ENCODE measurements at regions of chr5 and their contacts with region 1.

Region 1: DNA sequence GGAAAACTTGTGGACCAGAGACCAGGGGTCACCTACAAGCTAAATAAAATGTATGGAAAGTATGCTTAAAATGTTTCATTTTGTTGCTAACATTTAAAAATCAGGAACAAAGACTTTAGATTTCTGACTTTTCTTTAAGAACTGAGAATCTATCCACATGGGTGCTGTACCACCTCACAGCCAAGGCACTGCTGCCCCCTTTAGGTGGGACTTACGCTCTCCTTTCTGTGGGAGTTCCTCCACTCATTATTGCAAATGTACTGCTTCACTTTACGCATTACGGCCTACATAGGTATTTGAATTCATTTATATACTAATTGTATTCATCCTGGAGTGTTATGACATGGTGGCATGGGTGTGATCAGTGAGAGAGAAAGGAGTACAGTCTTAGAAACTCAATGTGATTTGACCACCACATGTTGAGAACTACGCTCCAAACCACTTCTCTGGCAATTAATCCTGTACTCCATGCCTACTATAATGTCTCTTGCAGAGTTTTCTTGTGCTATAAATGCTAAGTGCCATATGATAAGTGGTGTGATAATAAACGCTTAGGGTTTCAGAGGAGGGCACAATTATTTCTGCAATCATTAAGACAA is 24.7 kb upstream of the CETN3 start:
- DNase-seq: peak; percentile 82
- H3K4me3 Mint-ChIP-seq: no peak overlapping the region
- H3K27ac Mint-ChIP-seq: no peak overlapping the region
- H3K4me1 Mint-ChIP-seq: peaks cover 5% of the 10 kb centered on the region
- H3K27me3 Mint-ChIP-seq: peaks cover 27% of the 10 kb centered on the region

Region 2: GRCh38 chr5:90409318-90410177 is 24.7 kb before region 1 on chr5 and contains the start of gene CETN3:
- intact Hi-C with region 1: loop called (anchors 2 kb)
- DNase-seq: peak; percentile 96
- H3K4me3 Mint-ChIP-seq: no peak within 1 kb of the TSS
- H3K27ac Mint-ChIP-seq: no peak within 1 kb of the TSS
- H3K4me1 Mint-ChIP-seq: peaks cover 14% of the 10 kb centered on the region
- H3K27me3 Mint-ChIP-seq: peaks cover 3% of the 10 kb centered on the region
- total RNA-seq, gene CETN3: 39.4 and 40.0 TPM in 2 replicates

Region 3: DNA sequence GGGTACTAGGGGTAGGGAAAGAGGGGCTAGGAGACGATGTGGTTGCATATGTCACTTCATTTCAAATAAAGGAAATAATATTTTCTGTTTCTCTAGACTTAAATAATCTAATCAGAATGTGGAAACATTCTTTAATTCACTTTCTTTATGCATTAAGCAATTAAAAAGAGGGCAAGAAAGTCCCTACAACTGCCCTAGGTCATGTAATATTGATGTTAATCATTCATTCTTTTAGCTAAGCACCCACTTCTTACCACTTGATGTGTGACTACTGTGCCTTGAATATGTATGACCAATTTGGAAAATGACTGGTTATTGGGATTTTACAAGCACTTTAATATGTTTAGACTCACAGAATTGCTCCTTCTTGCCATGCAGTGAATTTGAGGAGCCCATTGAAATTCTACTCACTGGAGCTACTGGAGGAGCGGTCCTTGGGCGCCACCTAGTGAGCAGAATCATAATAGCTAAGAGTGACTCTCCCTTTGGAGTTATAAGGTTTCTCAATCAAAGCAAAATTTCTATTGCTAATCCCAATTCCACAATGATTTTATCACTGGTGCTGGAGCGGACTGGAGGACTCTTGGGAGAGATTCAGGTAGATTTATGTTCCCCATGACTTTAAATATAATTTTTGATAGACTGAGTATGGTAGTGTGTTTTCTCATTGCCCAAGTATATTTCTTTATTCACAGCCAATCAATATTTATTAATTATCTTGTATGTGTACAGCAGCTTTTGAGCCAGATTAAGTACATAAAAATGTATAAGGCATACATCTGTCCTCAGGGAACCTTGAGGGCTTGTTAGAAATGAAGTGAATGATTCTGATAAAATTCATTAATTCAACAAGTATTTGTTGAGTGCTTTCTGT is 349.5 kb after region 1 on chr5:
- intact Hi-C with region 1: loop called (anchors 1 kb)
- DNase-seq: peak; percentile 89
- H3K4me3 Mint-ChIP-seq: no peak overlapping the region
- H3K27ac Mint-ChIP-seq: no peak overlapping the region
- H3K4me1 Mint-ChIP-seq: no peaks in the 10 kb centered on the region
- H3K27me3 Mint-ChIP-seq: peaks cover 2% of the 10 kb centered on the region

Measured in activated CD4-positive, alpha-beta T cell treated with anti-CD3 and anti-CD28 coated beads, Interleukin-2, amount 10 ng/mL, durations not matched to agents 24 days and 14 days (primary cell).